A673 (cell line): ENCODE measurements at regions of chr2 and their contacts with region 1.

Region 1: GRCh38 chr2:141856215-141856919 is 274.4 kb downstream of the LRP1B start:
- DNase-seq: no peak
- H3K4me3 ChIP-seq: no peak overlapping the region
- H3K27ac ChIP-seq: no peak overlapping the region
- H3K4me1 ChIP-seq: no peaks in the 10 kb centered on the region
- H3K27me3 ChIP-seq: no peaks in the 10 kb centered on the region
- CTCF ChIP-seq: no peak

Region 2: GRCh38 chr2:141280037-141280436 is 576.3 kb before region 1 on chr2:
- CTCF ChIA-PET with region 1: no interaction called
- POLR2A ChIA-PET with region 1: interaction called, 11 read pairs
- intact Hi-C with region 1: no loop called
- DNase-seq: peak; percentile 12
- H3K4me3 ChIP-seq: no peak overlapping the region
- H3K27ac ChIP-seq: no peak overlapping the region
- H3K4me1 ChIP-seq: no peaks in the 10 kb centered on the region
- H3K27me3 ChIP-seq: no peaks in the 10 kb centered on the region
- CTCF ChIP-seq: no peak

Region 3: DNA sequence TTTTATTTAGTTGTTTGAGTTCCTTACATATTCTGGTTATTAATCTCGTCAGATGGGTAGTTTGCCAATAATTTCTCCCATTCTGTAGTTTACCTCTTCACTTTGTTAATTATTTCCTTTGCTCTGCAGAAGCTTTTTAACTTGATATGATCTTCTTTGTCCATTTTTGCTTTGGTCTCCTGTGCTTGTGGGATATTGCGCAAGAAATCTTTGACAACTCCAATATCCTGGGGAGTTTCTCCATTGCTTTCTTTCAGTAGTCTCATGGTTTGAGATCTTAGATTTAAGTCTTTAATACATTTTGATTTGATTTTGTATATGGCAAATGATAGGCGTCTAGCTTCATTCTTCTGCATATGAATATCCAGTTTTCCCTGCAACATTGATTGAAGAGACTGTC is 114.7 kb before region 1 on chr2:
- CTCF ChIA-PET with region 1: no interaction called
- POLR2A ChIA-PET with region 1: no interaction called
- intact Hi-C with region 1: no loop called
- DNase-seq: peak; percentile 6
- H3K4me3 ChIP-seq: no peak overlapping the region
- H3K27ac ChIP-seq: no peak overlapping the region
- H3K4me1 ChIP-seq: no peaks in the 10 kb centered on the region
- H3K27me3 ChIP-seq: no peaks in the 10 kb centered on the region
- CTCF ChIP-seq: no peak